ENCODE measurements at regions of chr9 and their contacts with region 1.

Region 1: GRCh38 chr9:89602978-89603766 is 1.6 kb upstream of the GADD45G start:
- DNase-seq: peak; percentile 82 to 89
- ATAC-seq: peak; percentile 35 to 45
- H3K4me3 ChIP-seq: peak overlapping the region; percentile 73 to 84 (median 78)
- H3K27ac ChIP-seq: peak overlapping the region; percentile 92 to 94 (median 94)
- H3K4me1 ChIP-seq: peaks cover 11 to 19% of the 10 kb centered on the region in 2 donors
- H3K27me3 ChIP-seq: no peaks in the 10 kb centered on the region
- CTCF ChIP-seq: peak; percentile 86 to 92 (median 89)
- POLR2A ChIP-seq: no peak

Region 2: GRCh38 chr9:89623925-89624420 is 20.8 kb after region 1 on chr9:
- in situ Hi-C with region 1: no loop called
- intact Hi-C with region 1: no loop called
- DNase-seq: peak; percentile 41 to 72
- ATAC-seq: peak; percentile 21 to 40
- H3K4me3 ChIP-seq: peak overlapping the region in 3 of 4 donors; percentile 12 to 32 (median 28)
- H3K27ac ChIP-seq: peak overlapping the region; percentile 88 to 94 (median 90)
- H3K4me1 ChIP-seq: peaks cover 55 to 59% of the 10 kb centered on the region in 2 donors
- H3K27me3 ChIP-seq: no peaks in the 10 kb centered on the region
- CTCF ChIP-seq: peak in 2 of 5 experiments; percentile 39 to 49
- POLR2A ChIP-seq: no peak

Region 3: DNA sequence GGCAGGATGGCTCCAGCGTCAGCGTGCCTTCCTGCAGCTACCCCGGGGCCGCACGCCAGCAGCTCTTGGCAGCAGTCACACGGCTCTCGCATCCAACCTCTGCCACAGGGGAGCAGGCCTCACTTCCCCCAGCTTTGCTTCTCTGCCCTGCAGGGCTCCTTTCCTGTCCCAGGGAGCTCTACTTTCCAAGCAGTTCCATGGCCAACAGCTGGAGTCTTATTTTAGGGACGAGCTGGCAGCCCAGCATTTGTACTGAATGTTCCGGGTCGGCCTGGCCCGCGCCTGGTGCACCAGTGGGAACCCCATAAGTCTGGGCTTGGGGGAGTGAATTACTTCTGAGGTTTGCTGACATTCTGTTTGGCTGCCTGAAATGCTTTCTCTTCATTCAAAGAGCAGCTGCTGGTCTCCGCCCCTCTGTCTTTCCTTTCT is 36.2 kb after region 1 on chr9:
- in situ Hi-C with region 1: no loop called
- intact Hi-C with region 1: loop called (anchors 1 kb)
- DNase-seq: peak; percentile 88 to 95
- ATAC-seq: peak; percentile 87 to 88
- H3K4me3 ChIP-seq: peak overlapping the region; percentile 47 to 58 (median 48)
- H3K27ac ChIP-seq: peak overlapping the region; percentile 85 to 93 (median 90)
- H3K4me1 ChIP-seq: peaks cover 57 to 63% of the 10 kb centered on the region in 2 donors
- H3K27me3 ChIP-seq: no peaks in the 10 kb centered on the region
- CTCF ChIP-seq: peak in 2 of 5 experiments; percentile 33 to 45
- POLR2A ChIP-seq: peak; percentile 32 to 43

Region 4: DNA sequence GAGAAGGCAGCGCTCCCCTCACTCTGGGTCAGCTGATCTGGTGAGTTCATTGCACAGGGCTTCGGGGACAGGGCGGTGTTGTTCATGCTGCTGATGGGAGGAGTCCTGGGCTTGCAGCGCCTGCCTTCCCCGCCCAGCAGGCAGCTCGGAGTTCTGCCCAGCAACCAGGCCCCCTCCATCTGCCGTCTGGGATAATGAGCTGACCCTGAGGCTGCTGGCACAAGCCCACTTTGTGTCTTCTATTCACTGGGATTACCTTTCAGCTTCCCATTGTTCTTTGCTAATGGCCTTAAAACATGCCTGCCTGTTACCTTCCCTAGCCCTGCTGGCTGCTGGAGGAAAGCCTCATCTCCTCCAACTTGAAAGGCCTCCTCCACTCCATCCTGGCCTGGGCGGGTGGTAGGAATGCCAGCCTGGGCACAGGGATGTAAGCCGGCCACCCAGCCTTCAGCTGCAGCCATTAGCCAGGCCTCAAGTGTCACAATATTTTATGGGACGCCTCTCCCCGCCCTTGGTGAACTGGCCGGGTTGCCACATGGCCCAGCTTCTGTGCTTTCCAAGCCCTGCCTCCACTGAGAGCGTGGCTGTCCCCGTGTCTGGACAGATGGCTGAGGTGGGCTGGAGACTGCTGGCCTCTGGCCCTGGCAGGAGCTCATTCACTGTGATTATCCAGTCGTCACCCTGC is 72.0 kb after region 1 on chr9:
- in situ Hi-C with region 1: no loop called
- intact Hi-C with region 1: loop called (anchors 1 kb)
- DNase-seq: peak; percentile 81 to 92
- ATAC-seq: peak; percentile 80 to 88
- H3K4me3 ChIP-seq: no peak overlapping the region
- H3K27ac ChIP-seq: peak overlapping the region; percentile 73 to 84 (median 84)
- H3K4me1 ChIP-seq: peaks cover 40 to 43% of the 10 kb centered on the region in 2 donors
- H3K27me3 ChIP-seq: no peaks in the 10 kb centered on the region
- CTCF ChIP-seq: no peak
- POLR2A ChIP-seq: no peak

Region 5: DNA sequence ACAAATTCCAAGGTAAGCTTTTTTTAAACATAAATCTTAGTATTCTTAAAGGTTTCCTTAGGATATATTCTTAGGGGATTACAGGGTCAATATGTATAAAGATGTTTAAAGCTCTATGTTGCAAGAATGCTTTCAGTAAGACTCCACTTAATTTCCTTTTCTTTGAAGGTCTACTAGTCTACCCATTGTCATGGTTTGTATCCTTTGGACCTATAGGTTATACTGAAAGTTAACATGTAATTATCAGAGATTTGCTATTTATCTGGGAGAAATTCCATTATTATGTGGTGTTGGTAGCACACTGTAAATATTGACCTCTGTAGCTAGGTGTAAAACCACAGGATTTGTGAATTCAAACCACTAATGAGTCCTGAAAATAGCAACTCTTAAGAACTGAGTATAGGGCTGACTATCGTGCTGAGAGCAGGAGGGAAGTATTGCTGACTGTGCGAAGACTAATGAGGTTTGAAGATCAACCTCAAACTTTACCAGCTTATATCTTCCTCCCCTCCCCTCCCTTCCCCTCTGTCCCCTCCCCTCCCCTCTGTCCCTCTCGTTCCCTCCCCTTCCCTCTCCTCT is 87.3 kb after region 1 on chr9:
- in situ Hi-C with region 1: no loop called
- intact Hi-C with region 1: no loop called
- DNase-seq: no peak
- ATAC-seq: no peak
- H3K4me3 ChIP-seq: no peak overlapping the region
- H3K27ac ChIP-seq: no peak overlapping the region
- H3K4me1 ChIP-seq: peaks cover 6 to 9% of the 10 kb centered on the region in 2 donors
- H3K27me3 ChIP-seq: no peaks in the 10 kb centered on the region
- CTCF ChIP-seq: no peak
- POLR2A ChIP-seq: no peak

Region 6: GRCh38 chr9:89732295-89732938 is 129.2 kb after region 1 on chr9:
- in situ Hi-C with region 1: no loop called
- intact Hi-C with region 1: loop called (anchors 2 kb)
- DNase-seq: peak in 1 of 2 donors; percentile 39
- ATAC-seq: peak; percentile 79 to 96
- H3K4me3 ChIP-seq: peak overlapping the region in 1 of 4 donors; percentile 15
- H3K27ac ChIP-seq: peak overlapping the region; percentile 61 to 74 (median 68)
- H3K4me1 ChIP-seq: peaks cover 19 to 21% of the 10 kb centered on the region in 2 donors
- H3K27me3 ChIP-seq: no peaks in the 10 kb centered on the region
- CTCF ChIP-seq: no peak
- POLR2A ChIP-seq: no peak

Region 7: GRCh38 chr9:89759572-89759971 is 156.4 kb after region 1 on chr9:
- in situ Hi-C with region 1: no loop called
- intact Hi-C with region 1: no loop called
- DNase-seq: no peak
- ATAC-seq: no peak
- H3K4me3 ChIP-seq: no peak overlapping the region
- H3K27ac ChIP-seq: no peak overlapping the region
- H3K4me1 ChIP-seq: peaks cover 0 to 15% of the 10 kb centered on the region in 2 donors
- H3K27me3 ChIP-seq: no peaks in the 10 kb centered on the region
- CTCF ChIP-seq: no peak
- POLR2A ChIP-seq: no peak

Region 8: GRCh38 chr9:89919169-89919681 is 316.1 kb after region 1 on chr9:
- in situ Hi-C with region 1: no loop called
- intact Hi-C with region 1: loop called (anchors 1 kb)
- DNase-seq: peak; percentile 34 to 65
- ATAC-seq: peak; percentile 86 to 95
- H3K4me3 ChIP-seq: no peak overlapping the region
- H3K27ac ChIP-seq: no peak overlapping the region
- H3K4me1 ChIP-seq: no peaks in the 10 kb centered on the region
- H3K27me3 ChIP-seq: no peaks in the 10 kb centered on the region
- CTCF ChIP-seq: peak in 4 of 5 experiments; percentile 21 to 57 (median 48)
- POLR2A ChIP-seq: no peak

Region 9: GRCh38 chr9:89941875-89942274 is 338.7 kb after region 1 on chr9:
- in situ Hi-C with region 1: no loop called
- intact Hi-C with region 1: loop called (anchors 5 kb)
- DNase-seq: peak in 1 of 2 donors; percentile 43
- ATAC-seq: peak; percentile 99 to 100
- H3K4me3 ChIP-seq: no peak overlapping the region
- H3K27ac ChIP-seq: peak overlapping the region; percentile 63 to 75 (median 68)
- H3K4me1 ChIP-seq: peaks cover 18 to 24% of the 10 kb centered on the region in 2 donors
- H3K27me3 ChIP-seq: no peaks in the 10 kb centered on the region
- CTCF ChIP-seq: no peak
- POLR2A ChIP-seq: no peak

Region 10: GRCh38 chr9:89999534-90000370 is 396.6 kb after region 1 on chr9:
- in situ Hi-C with region 1: no loop called
- intact Hi-C with region 1: loop called (anchors 2 kb)
- DNase-seq: peak; percentile 82 to 89
- ATAC-seq: peak; percentile 94 to 96
- H3K4me3 ChIP-seq: peak overlapping the region in 3 of 4 donors; percentile 36 to 42 (median 41)
- H3K27ac ChIP-seq: peak overlapping the region; percentile 72 to 89 (median 82)
- H3K4me1 ChIP-seq: peaks cover 45 to 46% of the 10 kb centered on the region in 2 donors
- H3K27me3 ChIP-seq: no peaks in the 10 kb centered on the region
- CTCF ChIP-seq: peak in 1 of 5 experiments; percentile 7
- POLR2A ChIP-seq: no peak

Measured in gastrocnemius medialis (tissue), 4 donors.